Psoas muscle (tissue), 8 donors: ENCODE measurements at regions of chr21 and their contacts with region 1.

Region 1: DNA sequence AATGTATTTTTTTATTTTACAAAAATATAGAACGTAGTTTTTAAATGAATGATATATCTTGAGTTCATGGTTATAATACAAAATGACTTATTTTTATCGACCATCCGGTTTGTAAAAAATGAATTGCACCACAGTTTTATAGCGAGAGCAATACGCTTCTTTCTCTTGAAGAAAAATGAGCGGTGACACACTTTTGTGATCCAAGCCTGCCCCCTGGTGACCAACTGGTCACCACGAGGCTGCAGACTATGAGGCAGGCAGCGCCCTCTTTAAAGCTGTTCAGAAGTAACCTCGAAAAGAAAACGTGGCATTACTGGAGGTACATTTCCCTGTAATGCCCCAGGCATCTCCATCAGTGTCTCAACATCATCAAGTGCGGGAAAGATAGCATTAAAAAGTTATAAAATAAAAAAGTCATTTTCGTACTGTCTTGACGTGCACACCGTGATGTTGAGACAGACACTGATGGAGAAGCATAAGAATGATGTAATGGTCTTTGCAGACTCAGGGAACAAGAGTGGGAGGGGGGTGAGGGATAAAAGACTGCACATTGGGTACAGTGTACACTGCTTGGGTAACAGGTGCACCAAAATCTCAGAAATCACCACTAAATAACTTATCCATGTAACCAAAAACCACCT is 734.2 kb upstream of the ADAMTS5 start:
- DNase-seq: peak; percentile 83 to 88
- ATAC-seq: peak; percentile 86 to 99 (median 93)
- H3K4me3 ChIP-seq: no peak overlapping the region
- H3K27ac ChIP-seq: no peak overlapping the region
- H3K4me1 ChIP-seq: no peaks in the 10 kb centered on the region
- H3K27me3 ChIP-seq: no peaks in the 10 kb centered on the region
- CTCF ChIP-seq: peak; percentile 95

Region 2: DNA sequence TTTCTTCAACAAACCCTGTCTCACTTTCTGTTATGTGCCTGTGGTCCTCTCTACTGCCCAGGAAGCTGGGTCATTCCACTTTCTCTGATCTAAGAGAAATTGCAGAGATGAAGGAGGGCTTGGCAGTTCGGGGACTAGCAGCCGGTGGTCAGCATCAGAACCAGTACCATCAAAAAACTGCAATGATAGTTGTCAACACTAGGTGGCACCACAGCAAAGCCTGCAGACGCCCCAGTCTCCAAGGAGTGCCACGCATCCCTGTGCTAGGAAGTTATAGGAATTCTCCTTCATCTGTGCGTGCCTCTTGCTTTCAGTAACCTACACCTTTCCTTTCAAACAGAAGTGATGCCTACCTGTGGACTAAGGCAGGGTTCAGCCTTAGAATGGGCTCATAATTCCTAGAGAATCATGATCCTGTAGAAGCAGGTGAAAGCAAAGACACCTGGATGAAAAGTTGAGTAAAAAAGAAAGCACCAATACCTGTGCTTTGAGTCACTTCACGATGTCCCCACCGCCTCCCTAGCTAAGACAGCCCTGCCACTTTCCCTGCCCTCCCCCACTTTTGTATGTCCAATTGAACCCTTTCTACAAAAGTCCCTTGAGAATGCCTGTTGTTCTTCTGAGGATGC is 985.1 kb before region 1 on chr21:
- intact Hi-C with region 1: loop called in 1 of 2 experiments (anchors 10 kb)
- DNase-seq: no peak
- ATAC-seq: peak; percentile 41 to 82 (median 49)
- H3K4me3 ChIP-seq: no peak overlapping the region
- H3K27ac ChIP-seq: no peak overlapping the region
- H3K4me1 ChIP-seq: peaks cover 8% of the 10 kb centered on the region
- H3K27me3 ChIP-seq: peaks cover 0 to 2% (median 0%) of the 10 kb centered on the region in 3 donors
- CTCF ChIP-seq: peak; percentile 84

Region 3: GRCh38 chr21:26850108-26850643 is 850.9 kb before region 1 on chr21:
- intact Hi-C with region 1: loop called (anchors 2 kb)
- DNase-seq: no peak
- ATAC-seq: no peak
- H3K4me3 ChIP-seq: peak overlapping the region; percentile 35
- H3K27ac ChIP-seq: no peak overlapping the region
- H3K4me1 ChIP-seq: peaks cover 6% of the 10 kb centered on the region
- H3K27me3 ChIP-seq: no peaks in the 10 kb centered on the region
- CTCF ChIP-seq: peak; percentile 64

Region 4: GRCh38 chr21:27362249-27362648 is 338.8 kb before region 1 on chr21:
- intact Hi-C with region 1: loop called in 1 of 2 experiments (anchors 10 kb)
- DNase-seq: no peak
- ATAC-seq: no peak
- H3K4me3 ChIP-seq: no peak overlapping the region
- H3K27ac ChIP-seq: no peak overlapping the region
- H3K4me1 ChIP-seq: no peaks in the 10 kb centered on the region
- H3K27me3 ChIP-seq: no peaks in the 10 kb centered on the region
- CTCF ChIP-seq: no peak

Region 5: DNA sequence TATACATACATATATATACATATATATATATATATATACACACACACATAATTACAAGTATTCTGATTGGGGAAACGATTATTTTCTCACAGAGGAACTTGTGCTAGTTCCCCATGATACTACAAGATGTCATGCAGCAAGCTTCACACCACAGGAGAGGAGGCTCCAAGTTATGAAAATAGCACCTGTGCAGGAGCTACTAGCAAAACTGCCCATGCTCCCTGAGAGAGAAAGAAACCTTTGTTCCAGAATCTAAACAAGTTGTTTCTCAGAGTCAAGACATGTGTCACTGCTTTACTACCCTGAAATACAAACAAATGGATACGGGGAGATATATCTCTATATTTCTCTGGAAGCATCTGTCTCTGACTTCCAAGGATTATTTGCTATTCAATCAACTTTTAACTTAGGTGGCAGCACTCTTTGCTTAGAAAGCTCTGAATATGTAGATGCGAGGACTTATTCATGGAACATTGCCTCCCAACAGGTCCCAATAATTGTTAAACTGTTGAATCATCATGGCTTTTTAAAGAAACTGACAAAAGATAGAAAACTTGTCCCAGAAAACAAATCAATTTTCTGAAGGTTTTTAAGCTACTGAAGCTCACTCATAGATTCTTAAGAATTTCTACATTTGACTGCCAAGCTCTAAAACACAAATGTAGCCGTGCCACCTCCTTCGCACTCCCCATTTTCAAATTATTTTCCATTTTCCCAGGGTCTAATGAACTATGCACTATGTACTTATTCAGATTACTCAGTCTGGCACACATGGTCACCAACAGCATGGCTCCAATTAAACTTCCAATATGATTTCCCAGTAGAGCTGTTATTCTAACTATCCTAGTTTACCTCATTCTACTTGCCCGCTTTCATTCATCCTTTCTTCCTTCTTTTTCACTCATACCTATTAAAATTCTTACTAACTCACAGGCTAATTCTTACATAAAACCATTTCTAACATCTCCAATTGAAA is 362.4 kb after region 1 on chr21:
- intact Hi-C with region 1: loop called in 1 of 2 experiments (anchors 10 kb)
- DNase-seq: no peak
- ATAC-seq: no peak
- H3K4me3 ChIP-seq: no peak overlapping the region
- H3K27ac ChIP-seq: no peak overlapping the region
- H3K4me1 ChIP-seq: peaks cover 5% of the 10 kb centered on the region
- H3K27me3 ChIP-seq: no peaks in the 10 kb centered on the region
- CTCF ChIP-seq: no peak

Region 6: DNA sequence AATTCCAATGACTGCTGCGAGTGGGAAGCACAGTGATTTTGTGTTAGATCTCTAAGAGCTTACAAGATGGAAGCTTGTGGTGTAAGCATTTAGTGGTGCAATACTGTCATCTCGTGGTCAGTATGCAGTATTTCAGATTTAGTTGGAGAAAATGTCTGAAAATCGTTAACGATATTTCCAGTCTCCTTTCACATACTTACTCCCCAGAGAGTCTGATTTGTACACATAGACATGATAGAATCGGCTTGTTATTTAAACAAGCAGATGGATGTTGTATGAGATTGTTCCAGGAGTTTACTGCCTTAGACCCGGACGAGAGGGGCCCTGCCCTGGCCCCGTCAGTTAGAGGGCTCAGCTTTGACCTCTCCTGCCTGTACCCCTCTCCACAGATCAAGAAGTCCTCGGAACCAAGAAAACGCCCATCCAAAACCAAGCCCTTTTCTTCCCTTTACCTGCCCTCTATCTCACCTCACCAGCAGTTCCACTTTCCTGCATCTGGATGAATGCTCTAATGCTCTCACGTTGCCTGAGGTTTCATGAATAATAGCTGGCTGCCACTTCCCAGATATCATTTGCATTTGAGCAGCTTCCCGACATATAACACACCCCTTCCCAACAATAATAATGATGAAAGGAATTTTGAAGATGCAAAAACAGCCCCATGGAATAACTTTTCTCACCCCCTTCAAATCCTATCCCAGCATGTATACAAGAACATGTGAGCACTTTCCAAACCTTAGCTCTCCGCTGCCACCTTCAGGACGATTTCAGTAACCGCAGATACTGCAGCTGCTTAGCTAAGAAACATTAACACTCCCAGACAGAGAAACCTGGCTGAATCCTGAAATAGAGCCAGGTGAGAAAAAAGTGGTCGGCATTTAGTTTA is 1044.3 kb after region 1 on chr21:
- intact Hi-C with region 1: loop called (anchors 10 kb)
- DNase-seq: peak; percentile 62 to 71
- ATAC-seq: peak; percentile 90 to 97 (median 94)
- H3K4me3 ChIP-seq: peak overlapping the region; percentile 70
- H3K27ac ChIP-seq: peak overlapping the region; percentile 74
- H3K4me1 ChIP-seq: peaks cover 6% of the 10 kb centered on the region
- H3K27me3 ChIP-seq: no peaks in the 10 kb centered on the region
- CTCF ChIP-seq: peak; percentile 97